ENCODE measurements at regions of chr16 and their contacts with region 1.

Region 1: DNA sequence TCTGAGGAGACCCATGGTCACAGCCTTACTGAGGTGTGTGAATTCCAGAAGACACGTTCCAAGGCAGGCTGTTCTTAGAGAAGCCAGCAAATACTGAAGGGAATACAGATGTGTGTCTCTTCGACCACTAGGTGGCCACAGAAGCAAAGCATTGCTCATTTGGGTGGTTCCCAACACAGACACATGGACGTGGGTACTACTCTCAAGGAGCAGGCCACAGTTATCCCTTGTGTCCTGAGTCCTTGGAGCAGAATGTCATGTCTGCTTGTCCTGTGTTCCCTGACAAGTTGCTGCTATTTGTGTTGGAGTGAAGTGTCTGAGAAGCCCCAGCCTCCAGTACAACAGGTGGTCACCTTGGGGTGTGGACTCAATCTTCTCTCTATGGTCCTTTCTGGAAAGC is 30.3 kb downstream of the HMOX2 start:
- DNase-seq: peak; percentile 79
- H3K4me3 Mint-ChIP-seq: peak overlapping the region; percentile 48
- H3K27ac Mint-ChIP-seq: peak overlapping the region; percentile 91
- H3K4me1 Mint-ChIP-seq: peaks cover 46% of the 10 kb centered on the region
- H3K27me3 Mint-ChIP-seq: no peaks in the 10 kb centered on the region

Region 2: DNA sequence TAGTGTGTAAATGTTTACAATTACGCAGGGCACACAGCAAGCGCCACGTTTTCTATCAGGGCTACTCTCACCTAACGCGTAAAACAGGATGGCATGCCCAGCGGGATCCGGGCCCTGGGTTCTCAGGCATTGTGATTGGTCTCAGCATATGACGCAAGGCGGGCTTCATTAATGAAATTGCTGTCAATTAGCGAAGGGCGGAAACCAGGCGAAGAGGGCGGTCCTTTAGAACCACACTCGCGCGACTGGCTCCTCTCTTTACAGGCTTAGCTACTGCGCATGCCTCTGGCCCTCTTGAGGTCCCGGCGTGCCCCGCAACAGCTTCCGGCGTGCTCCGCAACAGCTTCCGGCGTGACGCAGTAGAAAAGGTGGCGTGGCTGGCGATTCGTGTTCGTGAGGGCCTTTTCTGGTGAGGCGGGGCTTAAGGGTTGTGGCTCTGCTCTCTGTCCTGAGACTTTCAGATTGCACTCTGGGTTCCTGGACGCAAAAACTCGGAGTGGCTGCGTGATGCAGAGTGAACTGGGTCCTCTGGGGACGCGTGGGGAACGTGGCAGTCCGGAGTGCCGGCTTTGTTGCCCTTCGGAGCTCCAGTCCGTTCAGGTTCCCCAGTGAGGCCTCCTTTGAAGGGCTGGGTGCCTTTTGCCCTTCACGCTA is 1141.5 kb before region 1 on chr16:
- CTCF ChIA-PET with region 1: no interaction called
- intact Hi-C with region 1: no loop called
- DNase-seq: peak; percentile 91
- H3K4me3 Mint-ChIP-seq: peak overlapping the region; percentile 78
- H3K27ac Mint-ChIP-seq: peak overlapping the region; percentile 79
- H3K4me1 Mint-ChIP-seq: peaks cover 10% of the 10 kb centered on the region
- H3K27me3 Mint-ChIP-seq: peaks cover 3% of the 10 kb centered on the region

Region 3: GRCh38 chr16:4425378-4426020 is 81.0 kb before region 1 on chr16 and contains the start of gene DNAJA3:
- CTCF ChIA-PET with region 1: no interaction called
- intact Hi-C with region 1: no loop called
- DNase-seq: peak; percentile 93
- H3K4me3 Mint-ChIP-seq: peak within 1 kb of the TSS; percentile 99
- H3K27ac Mint-ChIP-seq: peak within 1 kb of the TSS; percentile 100
- H3K4me1 Mint-ChIP-seq: peaks cover 39% of the 10 kb centered on the region
- H3K27me3 Mint-ChIP-seq: no peaks in the 10 kb centered on the region
- total RNA-seq, gene DNAJA3: 86.7 to 88.0 TPM

Region 4: DNA sequence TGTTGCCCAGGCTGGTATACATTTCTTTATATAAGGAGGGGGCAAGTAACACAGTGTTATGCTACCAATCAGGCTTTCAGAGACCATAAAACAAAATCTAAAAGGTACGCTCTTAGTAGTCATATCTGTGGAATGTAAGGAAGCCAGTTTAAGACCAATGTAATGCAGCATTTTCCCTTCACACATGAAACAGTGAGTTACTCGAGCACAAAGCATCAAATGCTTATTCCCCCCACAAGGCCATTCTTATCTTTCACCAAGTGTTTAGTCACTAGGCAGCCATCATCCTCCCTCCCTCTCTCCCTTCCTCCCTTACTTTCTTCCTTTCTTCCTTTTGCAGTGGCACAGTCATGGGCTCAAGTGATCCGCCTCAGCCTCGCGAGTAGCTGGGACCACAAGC is 17.4 kb before region 1 on chr16:
- CTCF ChIA-PET with region 1: interaction called, 15 read pairs
- intact Hi-C with region 1: no loop called
- DNase-seq: no peak
- H3K4me3 Mint-ChIP-seq: no peak overlapping the region
- H3K27ac Mint-ChIP-seq: peak overlapping the region; percentile 89
- H3K4me1 Mint-ChIP-seq: peaks cover 64% of the 10 kb centered on the region
- H3K27me3 Mint-ChIP-seq: no peaks in the 10 kb centered on the region

Region 5: GRCh38 chr16:4529085-4530060 is 22.9 kb after region 1 on chr16:
- CTCF ChIA-PET with region 1: interaction called, 26 read pairs
- intact Hi-C with region 1: no loop called
- DNase-seq: peak; percentile 61
- H3K4me3 Mint-ChIP-seq: peak overlapping the region; percentile 37
- H3K27ac Mint-ChIP-seq: peak overlapping the region; percentile 81
- H3K4me1 Mint-ChIP-seq: peaks cover 43% of the 10 kb centered on the region
- H3K27me3 Mint-ChIP-seq: no peaks in the 10 kb centered on the region

Region 6: GRCh38 chr16:4550591-4550990 is 44.1 kb after region 1 on chr16:
- CTCF ChIA-PET with region 1: interaction called, 81 read pairs
- intact Hi-C with region 1: loop called (anchors 1 kb)
- DNase-seq: no peak
- H3K4me3 Mint-ChIP-seq: no peak overlapping the region
- H3K27ac Mint-ChIP-seq: no peak overlapping the region
- H3K4me1 Mint-ChIP-seq: peaks cover 5% of the 10 kb centered on the region
- H3K27me3 Mint-ChIP-seq: no peaks in the 10 kb centered on the region

Region 7: DNA sequence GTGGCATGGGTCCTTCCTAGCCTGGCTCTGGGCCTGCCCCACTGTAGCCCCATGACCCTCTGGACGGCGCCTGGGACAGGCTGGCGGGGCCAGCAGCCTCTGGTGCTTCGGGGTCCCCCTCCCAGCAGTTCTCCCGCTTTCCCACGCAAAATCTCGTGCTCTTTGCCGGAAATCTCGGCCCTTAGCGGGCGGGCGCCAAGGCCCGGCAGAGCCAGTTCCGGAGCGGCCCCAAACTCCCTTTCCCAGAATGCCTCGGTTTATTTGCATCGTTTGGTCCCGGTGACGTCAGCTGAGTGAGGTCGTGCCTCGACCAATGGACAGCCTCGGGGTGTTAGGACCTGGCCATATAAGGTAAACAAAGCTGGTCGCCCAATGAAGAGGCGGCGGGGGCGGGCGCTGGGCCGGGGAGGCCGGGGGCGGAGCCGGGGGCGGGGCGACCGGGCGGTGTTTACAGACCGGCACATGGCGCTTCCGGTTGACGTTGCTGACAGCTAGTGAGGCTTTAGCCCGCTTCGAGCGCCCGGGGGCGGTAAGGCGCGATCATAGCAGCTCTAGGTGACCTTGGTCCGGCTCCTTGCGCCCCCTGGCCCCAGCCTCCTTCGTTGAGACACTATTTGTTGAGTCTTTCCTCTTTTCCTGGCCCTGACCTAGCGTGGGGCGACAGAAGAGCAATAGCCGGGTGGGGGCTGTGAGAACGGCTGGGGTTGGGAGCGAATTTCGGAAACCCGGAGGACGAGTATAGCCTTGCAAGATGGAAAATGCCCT is 109.8 kb after region 1 on chr16:
- CTCF ChIA-PET with region 1: interaction called, 9 read pairs
- intact Hi-C with region 1: loop called (anchors 1 kb)
- DNase-seq: peak; percentile 100
- H3K4me3 Mint-ChIP-seq: peak overlapping the region; percentile 89
- H3K27ac Mint-ChIP-seq: peak overlapping the region; percentile 93
- H3K4me1 Mint-ChIP-seq: peaks cover 23% of the 10 kb centered on the region
- H3K27me3 Mint-ChIP-seq: no peaks in the 10 kb centered on the region

Region 8: DNA sequence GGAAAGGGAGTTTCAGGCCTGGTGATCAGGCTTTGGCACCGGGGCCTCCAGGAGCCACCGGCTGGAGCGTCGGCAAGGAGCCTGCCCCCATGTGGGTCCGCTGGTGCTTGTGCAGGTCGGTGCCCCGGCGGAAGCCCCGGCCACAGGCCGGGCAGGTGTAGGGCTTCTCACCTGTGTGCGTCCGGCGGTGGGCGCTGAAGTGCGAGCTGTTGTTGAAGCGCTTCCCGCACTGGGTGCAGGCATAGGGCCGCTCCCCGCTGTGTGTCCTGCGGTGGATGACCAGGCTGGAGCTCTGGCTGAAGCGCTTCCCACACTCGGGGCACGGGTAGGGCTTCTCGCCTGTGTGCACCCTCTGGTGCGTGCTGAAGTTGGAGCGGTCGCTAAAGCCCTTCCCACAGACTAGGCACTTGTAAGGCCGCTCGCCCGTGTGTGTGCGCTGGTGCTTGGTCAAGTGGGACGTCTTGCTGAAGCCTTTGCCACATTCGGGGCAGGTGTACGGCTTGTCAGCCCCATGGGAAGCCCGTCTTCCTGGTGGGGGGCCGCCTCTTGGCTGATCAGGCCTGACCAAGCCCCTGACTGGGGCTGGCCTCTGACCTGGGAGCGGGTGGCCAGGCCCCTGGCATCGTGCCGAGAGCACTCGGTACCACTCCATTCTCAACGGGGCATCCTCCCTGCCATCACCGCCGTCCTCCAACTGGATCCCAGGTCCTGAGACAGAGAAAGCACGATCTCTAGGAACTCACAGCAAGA is 246.1 kb after region 1 on chr16:
- CTCF ChIA-PET with region 1: no interaction called
- intact Hi-C with region 1: no loop called
- DNase-seq: no peak
- H3K4me3 Mint-ChIP-seq: no peak overlapping the region
- H3K27ac Mint-ChIP-seq: no peak overlapping the region
- H3K4me1 Mint-ChIP-seq: peaks cover 11% of the 10 kb centered on the region
- H3K27me3 Mint-ChIP-seq: no peaks in the 10 kb centered on the region

Region 9: DNA sequence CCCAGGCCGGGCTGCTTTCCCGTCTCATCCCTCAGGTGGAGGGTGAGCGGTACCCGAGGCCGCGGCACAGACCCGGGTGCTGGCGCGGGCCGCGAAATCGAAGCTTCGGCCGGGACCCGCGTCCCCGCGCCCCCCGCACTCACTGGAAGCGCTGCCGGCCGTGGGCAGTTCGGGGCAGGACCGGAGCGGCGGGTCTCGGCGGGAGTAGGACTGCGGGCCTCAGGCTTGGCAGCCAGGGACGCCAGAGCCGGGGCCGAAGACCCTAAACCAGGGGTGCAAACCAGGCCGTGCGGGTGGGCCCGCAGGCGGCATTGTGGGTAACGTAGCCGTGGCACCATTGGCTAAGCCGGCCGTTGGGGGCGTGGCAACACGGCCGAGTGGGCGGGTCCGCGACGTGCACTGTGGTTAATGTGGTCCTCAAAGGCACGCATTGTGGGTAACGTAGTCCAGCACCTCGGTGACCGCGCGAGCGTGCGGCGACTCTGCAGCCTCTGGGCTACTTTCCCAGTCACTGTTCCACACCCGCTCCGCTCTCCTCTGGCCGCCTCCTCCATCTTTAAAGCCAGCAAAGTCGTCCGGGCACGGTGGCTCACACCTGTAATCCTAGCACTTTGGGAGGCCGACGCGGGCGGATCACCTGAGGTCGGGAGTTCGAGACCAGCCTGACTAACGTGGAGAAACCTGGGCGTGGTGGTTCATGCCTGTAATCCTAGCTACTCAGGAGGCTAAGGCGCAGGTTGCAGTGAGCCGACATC is 260.6 kb after region 1 on chr16 and contains the start of gene ZNF500:
- CTCF ChIA-PET with region 1: no interaction called
- intact Hi-C with region 1: no loop called
- DNase-seq: peak; percentile 98
- H3K4me3 Mint-ChIP-seq: peak within 1 kb of the TSS; percentile 93
- H3K27ac Mint-ChIP-seq: peak within 1 kb of the TSS; percentile 93
- H3K4me1 Mint-ChIP-seq: peaks cover 35% of the 10 kb centered on the region
- H3K27me3 Mint-ChIP-seq: no peaks in the 10 kb centered on the region
- total RNA-seq, gene ZNF500: 8.9 to 11.2 TPM

Region 10: DNA sequence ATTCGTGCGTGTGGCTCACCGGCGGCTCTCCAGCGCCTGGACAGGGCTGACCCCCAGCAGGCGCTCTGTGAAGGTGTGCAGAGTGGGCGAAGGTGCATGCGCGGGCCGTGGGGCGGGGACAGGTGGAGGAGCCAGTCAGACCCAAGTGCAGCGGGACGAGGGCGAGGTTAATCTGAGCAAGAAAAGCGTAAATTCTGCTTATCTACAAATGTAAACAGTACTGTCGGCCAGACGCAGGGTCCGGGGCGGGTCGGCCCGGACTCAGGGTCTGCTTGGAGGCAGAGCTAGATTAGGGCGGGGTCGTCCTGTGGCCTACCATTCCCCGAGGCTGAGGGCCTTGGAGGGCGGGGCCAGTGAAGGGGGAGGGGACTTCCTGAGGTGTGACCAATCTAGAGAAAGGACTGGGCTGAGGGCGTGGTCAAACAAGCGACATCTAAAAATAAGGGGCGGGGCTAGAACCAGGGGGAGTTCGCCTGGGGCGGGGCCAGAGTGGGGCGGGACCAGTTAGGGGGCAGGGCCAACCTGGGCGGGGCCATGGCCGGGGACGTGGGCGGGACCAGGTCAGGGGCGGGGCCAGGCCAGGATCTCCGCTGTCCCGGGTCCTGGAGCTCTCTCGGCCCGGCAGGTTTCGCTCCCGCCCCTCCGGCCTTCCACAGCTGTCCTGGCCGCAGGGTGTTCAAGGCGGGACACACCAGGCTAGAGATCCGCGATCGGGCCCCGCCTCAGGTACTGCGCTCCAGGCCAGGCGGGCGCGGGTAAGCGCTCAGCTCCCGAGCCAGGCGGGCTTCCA is 451.5 kb after region 1 on chr16 and contains the start of gene SEC14L5:
- CTCF ChIA-PET with region 1: no interaction called
- intact Hi-C with region 1: loop called (anchors 5 kb)
- DNase-seq: peak; percentile 96
- H3K4me3 Mint-ChIP-seq: peak within 1 kb of the TSS; percentile 78
- H3K27ac Mint-ChIP-seq: no peak within 1 kb of the TSS
- H3K4me1 Mint-ChIP-seq: peaks cover 14% of the 10 kb centered on the region
- H3K27me3 Mint-ChIP-seq: peaks cover 30% of the 10 kb centered on the region
- total RNA-seq, gene SEC14L5: not detected